Left lung (tissue), 14 donors: ENCODE measurements at regions of chr16 and their contacts with region 1.

Region 1: GRCh38 chr16:48542020-48542473 is 67.9 kb downstream of the N4BP1 start:
- DNase-seq: peak in 3 of 4 donors; percentile 62 to 84 (median 68)
- ATAC-seq: peak; percentile 69
- H3K4me3 ChIP-seq: no peak overlapping the region
- H3K27ac ChIP-seq: peak overlapping the region in 1 of 2 donors; percentile 6
- H3K4me1 ChIP-seq: peaks cover 14 to 36% of the 10 kb centered on the region in 2 donors
- H3K27me3 ChIP-seq: no peaks in the 10 kb centered on the region
- CTCF ChIP-seq: peak; percentile 48 to 51

Region 2: DNA sequence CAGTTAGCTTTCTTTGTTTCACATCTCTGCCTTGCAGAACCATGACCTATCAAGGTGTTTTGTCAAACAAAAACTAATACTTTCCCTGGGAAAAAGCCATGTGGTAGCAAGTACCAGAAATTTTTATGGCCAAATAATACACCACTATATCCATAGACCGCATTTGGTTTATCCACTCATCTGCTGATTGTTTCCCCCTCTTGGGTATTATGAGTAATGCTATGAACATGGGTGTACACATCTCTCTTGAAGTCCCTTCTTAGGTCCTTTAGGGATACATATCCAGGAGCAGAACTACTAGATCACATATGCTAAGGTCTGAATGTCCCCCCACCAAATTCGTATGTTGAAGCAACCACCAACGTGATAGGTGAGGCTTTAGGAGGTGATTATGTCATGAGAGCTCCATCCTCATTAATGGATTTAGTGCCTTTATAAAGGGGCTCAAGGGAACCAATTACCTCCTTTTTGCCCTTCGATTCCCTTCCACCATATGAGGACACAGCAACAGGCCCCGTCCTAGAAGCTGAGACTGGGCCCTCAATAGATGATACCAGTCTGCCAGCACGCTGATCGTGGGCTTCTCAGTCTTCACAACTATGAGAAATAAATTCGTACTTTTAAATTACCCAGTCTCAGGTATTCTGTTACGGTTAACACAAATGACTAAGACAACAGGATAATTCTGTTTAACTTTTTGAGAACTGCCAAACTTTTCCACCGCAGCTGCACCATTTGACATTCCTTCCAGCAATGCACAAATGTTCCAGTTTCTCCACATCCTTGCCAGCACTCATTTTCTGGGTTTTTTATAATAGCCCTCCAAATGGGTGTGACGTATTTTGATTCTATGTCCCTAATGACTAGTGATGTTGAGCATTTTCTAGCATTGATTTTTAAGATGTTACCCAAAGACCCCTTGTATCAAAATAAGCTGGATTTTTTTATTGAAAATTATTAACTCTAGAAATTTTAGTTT is 186.9 kb before region 1 on chr16:
- intact Hi-C with region 1: loop called in 1 of 2 experiments (anchors 5 kb)
- DNase-seq: no peak
- ATAC-seq: no peak
- H3K4me3 ChIP-seq: no peak overlapping the region
- H3K27ac ChIP-seq: no peak overlapping the region
- H3K4me1 ChIP-seq: peaks cover 0 to 12% of the 10 kb centered on the region in 2 donors
- H3K27me3 ChIP-seq: no peaks in the 10 kb centered on the region
- CTCF ChIP-seq: no peak